Endothelial cell of umbilical vein (primary cell): ENCODE measurements at regions of chr19 and their contacts with region 1.

Region 1: GRCh38 chr19:47075179-47075810 is 26.9 kb upstream of the TMEM160 start:
- DNase-seq: no peak
- H3K4me3 ChIP-seq: no peak overlapping the region
- H3K27ac ChIP-seq: no peak overlapping the region
- H3K4me1 ChIP-seq: no peaks in the 10 kb centered on the region
- H3K27me3 ChIP-seq: no peaks in the 10 kb centered on the region
- CTCF ChIP-seq: no peak
- POLR2A ChIP-seq: no peak

Region 2: DNA sequence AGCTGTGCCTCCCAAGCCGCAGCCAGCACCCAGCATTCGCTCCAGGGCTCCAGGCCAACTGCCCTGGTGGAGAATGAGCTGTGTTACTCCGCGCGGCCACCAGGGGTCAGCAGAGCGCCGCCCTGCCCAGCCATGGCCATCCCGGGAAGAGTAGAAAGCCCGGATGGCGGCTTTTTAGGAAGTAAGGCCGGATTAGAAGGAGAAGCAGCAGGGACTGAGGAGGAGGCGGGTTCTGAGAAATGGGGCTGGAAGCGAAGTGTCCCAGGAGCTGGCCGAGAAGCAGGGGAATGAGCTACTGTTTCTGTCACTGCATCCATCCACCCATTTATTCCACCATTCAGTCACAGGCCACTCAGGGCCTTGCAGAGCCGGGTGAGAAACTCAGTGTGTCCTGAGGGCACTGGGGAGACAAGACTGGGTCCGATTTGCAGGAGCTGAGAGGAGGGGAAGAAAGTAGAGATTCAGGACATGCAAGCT is 62.2 kb before region 1 on chr19:
- CTCF ChIA-PET with region 1: interaction called, 13 read pairs
- POLR2A ChIA-PET with region 1: no interaction called
- dilution Hi-C with region 1: no loop called
- intact Hi-C with region 1: loop called (anchors 5 kb)
- DNase-seq: peak; percentile 66
- H3K4me3 ChIP-seq: no peak overlapping the region
- H3K27ac ChIP-seq: no peak overlapping the region
- H3K4me1 ChIP-seq: no peaks in the 10 kb centered on the region
- H3K27me3 ChIP-seq: no peaks in the 10 kb centered on the region
- CTCF ChIP-seq: peak; percentile 98 to 99
- POLR2A ChIP-seq: no peak

Region 3: GRCh38 chr19:47063874-47064273 is 11.4 kb before region 1 on chr19:
- CTCF ChIA-PET with region 1: interaction called, 15 read pairs
- POLR2A ChIA-PET with region 1: interaction called, 3 read pairs
- dilution Hi-C with region 1: no loop called
- intact Hi-C with region 1: no loop called
- DNase-seq: no peak
- H3K4me3 ChIP-seq: no peak overlapping the region
- H3K27ac ChIP-seq: no peak overlapping the region
- H3K4me1 ChIP-seq: no peaks in the 10 kb centered on the region
- H3K27me3 ChIP-seq: no peaks in the 10 kb centered on the region
- CTCF ChIP-seq: no peak
- POLR2A ChIP-seq: no peak

Region 4: DNA sequence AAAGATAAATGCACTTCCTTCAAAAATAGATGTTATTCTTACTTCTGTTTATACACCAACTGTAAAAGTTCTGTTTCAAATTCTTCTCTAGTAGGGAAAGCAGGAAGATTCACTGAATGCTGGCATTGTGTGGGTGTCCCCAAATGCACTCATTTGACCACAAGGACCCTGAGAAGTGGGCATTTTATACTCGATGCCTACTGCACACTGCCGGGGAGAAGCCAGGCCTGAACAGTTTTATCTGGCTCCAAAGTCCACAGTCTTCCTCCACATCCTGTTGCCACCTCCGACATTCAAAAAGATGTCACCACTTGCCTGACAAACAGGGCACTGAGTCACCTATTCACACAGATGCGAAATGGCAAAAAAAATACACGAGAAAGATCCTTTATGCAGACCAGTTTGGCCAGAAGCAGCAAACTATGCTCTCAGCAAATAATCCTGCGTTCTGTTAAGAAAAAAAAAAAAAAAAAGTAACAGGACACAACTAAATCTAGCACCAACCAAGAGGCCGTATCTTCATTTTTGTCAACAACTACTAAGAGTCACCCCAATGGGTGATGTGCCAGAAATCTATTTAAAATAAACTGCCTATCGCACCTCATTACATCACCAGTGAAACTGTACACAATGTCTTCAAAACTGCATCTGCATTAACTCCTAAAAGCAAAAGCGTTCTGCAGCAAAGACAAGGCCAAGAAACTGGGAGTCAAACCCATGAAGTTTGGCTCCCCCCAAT is 32.1 kb after region 1 on chr19:
- CTCF ChIA-PET with region 1: interaction called, 25 read pairs
- POLR2A ChIA-PET with region 1: no interaction called
- dilution Hi-C with region 1: no loop called
- intact Hi-C with region 1: loop called (anchors 1 kb)
- DNase-seq: peak; percentile 57
- H3K4me3 ChIP-seq: no peak overlapping the region
- H3K27ac ChIP-seq: peak overlapping the region; percentile 26
- H3K4me1 ChIP-seq: peaks cover 39% of the 10 kb centered on the region
- H3K27me3 ChIP-seq: no peaks in the 10 kb centered on the region
- CTCF ChIP-seq: no peak
- POLR2A ChIP-seq: no peak

Region 5: DNA sequence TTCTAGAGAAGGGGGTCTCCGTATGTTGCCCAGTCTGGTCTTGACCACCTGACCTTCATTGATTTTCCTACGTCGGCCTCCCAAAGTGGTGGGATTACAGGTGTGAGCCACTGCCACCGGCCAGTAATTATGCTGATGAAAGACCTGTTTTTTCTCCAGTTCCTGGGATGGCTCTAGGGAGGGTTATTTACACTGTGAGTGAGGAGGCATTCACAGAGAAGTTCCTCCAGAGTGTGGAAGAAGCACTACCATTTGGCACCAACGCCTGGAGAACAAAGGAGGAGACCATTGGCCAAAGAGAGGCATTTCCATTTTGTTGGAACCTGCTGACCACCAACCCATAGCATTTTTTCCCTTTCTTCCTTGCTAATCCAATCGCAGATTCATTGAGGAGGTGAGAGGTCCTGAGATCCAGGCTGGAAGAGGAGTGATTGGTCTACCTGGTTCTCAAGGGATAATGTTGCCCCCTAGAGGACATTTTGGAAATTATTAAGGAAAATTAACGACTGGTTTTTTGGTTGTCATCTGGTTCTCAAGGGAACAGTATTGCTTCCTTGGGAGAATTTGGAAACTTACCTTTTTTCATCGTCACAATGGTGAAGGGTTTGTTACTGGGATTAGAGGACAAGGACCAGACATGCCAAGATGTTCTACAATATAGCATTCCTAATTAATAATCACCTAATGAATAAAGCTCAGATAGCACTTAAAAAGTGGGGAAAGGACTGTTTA is 49.8 kb after region 1 on chr19:
- CTCF ChIA-PET with region 1: interaction called, 110 read pairs
- POLR2A ChIA-PET with region 1: no interaction called
- dilution Hi-C with region 1: no loop called
- intact Hi-C with region 1: loop called (anchors 1 kb)
- DNase-seq: peak; percentile 74
- H3K4me3 ChIP-seq: no peak overlapping the region
- H3K27ac ChIP-seq: no peak overlapping the region
- H3K4me1 ChIP-seq: no peaks in the 10 kb centered on the region
- H3K27me3 ChIP-seq: no peaks in the 10 kb centered on the region
- CTCF ChIP-seq: peak; percentile 50 to 53
- POLR2A ChIP-seq: no peak

Region 6: GRCh38 chr19:47296036-47296435 is 220.7 kb after region 1 on chr19:
- CTCF ChIA-PET with region 1: no interaction called
- POLR2A ChIA-PET with region 1: no interaction called
- dilution Hi-C with region 1: no loop called
- intact Hi-C with region 1: no loop called
- DNase-seq: peak; percentile 55
- H3K4me3 ChIP-seq: no peak overlapping the region
- H3K27ac ChIP-seq: no peak overlapping the region
- H3K4me1 ChIP-seq: no peaks in the 10 kb centered on the region
- H3K27me3 ChIP-seq: no peaks in the 10 kb centered on the region
- CTCF ChIP-seq: peak; percentile 62 to 70
- POLR2A ChIP-seq: no peak